Sciatic nerve (tissue), 2 donors: ENCODE measurements at regions of chr3 and their contacts with region 1.

Region 1: DNA sequence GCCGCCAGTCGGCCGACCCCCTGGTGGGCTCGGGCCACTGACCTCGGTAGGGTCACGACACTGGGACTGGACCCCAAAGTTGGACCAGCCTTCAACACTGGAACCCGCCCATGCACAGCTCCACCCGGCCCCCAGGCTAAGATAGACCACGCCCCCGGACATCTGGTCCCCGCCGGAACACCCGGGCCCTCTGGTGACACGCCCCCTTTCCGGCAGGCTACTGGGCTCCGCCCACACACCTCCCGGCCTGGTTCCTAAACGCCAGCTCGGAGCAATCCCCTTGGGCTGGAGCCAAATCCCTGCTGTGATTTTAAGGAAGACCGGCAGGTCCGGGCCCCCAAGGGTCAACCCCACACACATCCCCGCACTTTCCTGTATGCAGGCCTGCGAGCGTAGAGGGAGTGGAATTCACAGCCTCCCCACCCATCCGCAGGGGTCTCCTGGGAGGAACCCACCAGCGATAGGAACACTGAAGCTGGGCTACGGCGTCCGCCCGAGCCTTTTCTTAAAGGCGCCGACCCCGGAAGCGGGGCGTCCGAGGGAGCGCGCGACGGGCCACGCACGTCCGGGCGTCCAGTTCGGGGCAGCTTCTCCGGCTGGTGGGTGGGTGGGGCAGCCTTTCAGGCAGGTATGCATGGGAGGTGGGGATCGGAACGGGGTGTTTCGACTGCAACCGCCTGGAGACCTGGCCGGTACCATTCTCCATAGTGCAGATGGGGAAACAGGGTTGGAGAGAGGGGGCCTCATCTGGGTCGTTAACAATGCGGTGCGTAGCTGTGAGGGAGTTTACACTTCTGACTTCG is at the start of gene HEMK1:
- DNase-seq: peak; percentile 99
- ATAC-seq: peak; percentile 94
- total RNA-seq, gene HEMK1: 21.3 TPM

Region 2: DNA sequence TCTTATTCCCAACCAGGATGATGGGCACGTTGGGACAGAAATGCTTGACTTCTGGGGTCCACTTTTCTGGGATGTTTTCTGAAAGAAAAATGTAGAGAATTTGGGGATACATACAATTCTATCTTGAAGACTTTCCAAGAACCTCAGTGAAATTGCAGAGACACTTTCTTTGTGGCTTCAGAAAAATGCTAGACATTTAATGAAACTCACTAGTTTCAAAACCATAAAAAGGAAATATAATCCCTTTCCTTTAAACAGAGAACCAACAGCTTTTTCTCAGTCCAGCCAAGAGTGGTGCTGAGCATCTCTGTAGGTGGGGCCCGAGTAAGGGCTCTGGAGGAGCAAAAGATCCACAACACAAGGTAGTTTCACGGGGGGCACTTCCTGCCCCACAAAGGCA is 1206.6 kb before region 1 on chr3:
- intact Hi-C with region 1: no loop called
- DNase-seq: no peak
- ATAC-seq: no peak

Region 3: DNA sequence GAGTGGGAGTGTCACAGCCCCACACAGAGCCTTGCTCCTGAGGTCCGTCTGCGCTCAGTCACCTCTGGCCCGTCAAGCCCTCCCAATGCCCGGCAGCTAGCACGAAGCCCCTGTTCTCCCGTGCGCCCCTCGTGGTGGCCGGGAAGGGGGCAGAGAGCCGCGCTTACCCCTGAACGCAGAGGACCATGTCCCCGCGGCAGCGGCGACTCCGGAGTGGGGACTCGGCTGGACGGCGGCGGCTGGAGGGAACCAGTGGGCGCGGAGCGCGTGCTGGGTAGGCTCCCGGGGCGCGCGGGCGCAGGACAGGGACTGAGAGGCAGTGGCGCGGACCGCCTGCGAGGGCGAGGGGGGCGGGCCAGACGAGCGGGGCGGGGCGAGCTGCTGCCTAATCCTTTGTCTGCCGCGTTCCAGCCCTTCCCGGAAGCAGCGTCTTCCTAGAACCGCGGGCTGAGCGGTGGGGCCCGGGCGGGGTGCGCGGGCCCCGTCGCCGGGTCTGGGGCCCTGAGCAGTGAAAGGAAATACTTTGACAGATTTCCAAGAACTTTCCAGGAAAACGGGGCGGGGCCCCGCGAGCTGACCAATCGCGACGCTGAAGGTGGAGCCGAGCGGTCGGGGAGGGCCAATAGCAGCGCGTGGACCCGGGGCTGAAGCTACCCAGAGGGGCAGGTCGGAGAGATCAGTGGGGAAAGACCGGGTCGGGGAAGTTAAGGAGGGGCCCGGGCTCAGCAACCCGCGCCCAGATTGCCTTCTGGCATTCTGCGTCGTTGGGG is 42.5 kb after region 1 on chr3 and contains the start of gene CISH:
- intact Hi-C with region 1: loop called (anchors 2 kb)
- DNase-seq: peak; percentile 96
- ATAC-seq: peak; percentile 86
- total RNA-seq, gene CISH: 10.6 TPM

Region 4: DNA sequence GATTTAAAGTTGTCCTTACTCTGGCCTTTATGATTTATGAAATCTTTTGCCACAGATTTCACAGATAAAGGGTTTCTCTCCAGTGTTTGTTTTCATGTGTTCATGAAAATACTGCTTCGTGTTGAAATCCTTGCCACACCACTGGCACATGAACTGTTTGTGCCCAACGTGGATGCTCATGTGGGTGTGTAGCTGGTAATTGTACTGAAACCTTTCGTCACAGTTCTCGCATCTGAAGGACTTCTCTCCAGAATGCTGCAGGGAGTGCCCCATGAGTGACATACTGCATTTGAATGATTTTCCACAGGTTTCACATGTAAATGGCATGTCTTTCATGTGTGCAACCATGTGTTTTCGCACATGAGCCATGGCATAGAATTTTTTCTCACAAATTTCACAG is 217.5 kb after region 1 on chr3:
- intact Hi-C with region 1: no loop called
- DNase-seq: no peak
- ATAC-seq: no peak

Region 5: DNA sequence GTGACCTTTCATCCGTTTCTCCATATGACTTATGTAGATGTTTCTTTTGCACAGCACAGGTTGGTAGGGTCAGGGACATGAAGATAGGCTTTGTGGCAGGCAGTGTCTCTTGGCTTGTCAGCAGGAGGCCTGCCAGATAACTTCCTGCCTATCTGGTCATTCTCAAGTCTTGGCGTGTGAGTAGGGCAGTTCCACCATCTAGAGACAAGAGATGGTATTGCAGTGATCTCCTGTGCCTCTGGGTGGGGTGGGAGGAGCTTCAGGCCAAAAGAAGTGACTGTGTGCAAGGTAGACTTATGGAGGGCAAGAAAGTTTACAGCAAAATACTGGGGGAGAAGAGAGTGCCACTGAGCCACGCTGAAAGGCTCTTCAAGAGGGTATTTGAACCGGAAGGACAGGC is 1112.9 kb after region 1 on chr3:
- intact Hi-C with region 1: loop called (anchors 5 kb)
- DNase-seq: no peak
- ATAC-seq: peak; percentile 91